T-cell (primary cell): ENCODE measurements at regions of chr2 and their contacts with region 1.

Region 1: GRCh38 chr2:189661148-189661956 is at the start of gene ASNSD1:
- DNase-seq: peak; percentile 94 to 100 (median 99)
- ATAC-seq: peak; percentile 87 to 93 (median 88)
- H3K4me3 ChIP-seq: peak within 1 kb of the TSS; percentile 93 to 98
- H3K4me3 Mint-ChIP-seq: no peak within 1 kb of the TSS
- H3K27ac ChIP-seq: peak within 1 kb of the TSS; percentile 92
- H3K27ac Mint-ChIP-seq: no peak within 1 kb of the TSS
- H3K4me1 ChIP-seq: peaks cover 27 to 40% of the 10 kb centered on the region in 2 experiments
- H3K4me1 Mint-ChIP-seq: peaks cover 54 to 62% (median 55%) of the 10 kb centered on the region in 3 donors
- H3K27me3 ChIP-seq: no peaks in the 10 kb centered on the region
- H3K27me3 Mint-ChIP-seq: no peaks in the 10 kb centered on the region
- total RNA-seq, gene ASNSD1: 31.7 to 43.8 (median 35.9) TPM

Region 2: DNA sequence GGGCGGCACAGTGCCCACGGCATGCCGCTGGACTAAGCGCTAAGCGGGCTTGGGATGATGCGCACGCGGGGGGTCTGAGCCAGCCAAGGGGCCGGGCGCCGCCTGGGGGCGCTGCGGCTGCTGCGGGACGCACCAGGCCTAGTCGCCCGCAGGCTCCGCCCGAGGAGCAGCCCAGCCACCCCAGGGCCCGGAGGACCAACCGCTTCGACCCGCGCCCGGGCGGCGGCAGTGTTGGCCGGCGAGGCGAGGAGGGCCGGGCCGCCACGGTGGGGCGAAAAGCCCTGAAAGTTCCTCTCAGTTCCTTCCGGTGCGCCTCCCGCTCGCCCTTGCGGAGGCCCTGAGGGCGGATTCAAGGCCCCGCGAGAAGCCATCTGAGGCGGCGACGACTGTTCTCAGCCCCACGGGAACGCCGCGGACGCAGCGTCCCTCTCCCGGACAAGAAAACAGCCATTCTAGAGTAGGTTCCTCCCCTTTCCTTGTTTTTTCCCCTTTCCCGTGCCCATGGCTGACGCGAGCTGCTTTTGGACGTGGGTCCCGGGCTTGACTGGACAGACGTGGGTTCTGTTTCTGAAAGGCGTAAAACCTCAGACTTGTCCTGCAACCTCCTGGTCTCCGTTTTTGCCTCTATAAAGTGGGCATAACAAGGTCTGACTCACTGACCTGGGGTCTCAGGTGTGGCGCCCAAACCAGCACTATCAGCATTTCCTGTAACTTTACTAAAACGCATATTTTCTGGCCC is 13.2 kb after region 1 on chr2 and contains the start of gene ANKAR:
- CTCF ChIA-PET with region 1: interaction called, 17 to 96 read pairs
- POLR2A ChIA-PET with region 1: interaction called, 4 to 8 read pairs
- DNase-seq: peak; percentile 54 to 89 (median 72)
- ATAC-seq: peak; percentile 95 to 97 (median 96)
- H3K4me3 ChIP-seq: peak within 1 kb of the TSS; percentile 67 to 96
- H3K4me3 Mint-ChIP-seq: peak within 1 kb of the TSS; percentile 91 to 95 (median 93)
- H3K27ac ChIP-seq: peak within 1 kb of the TSS; percentile 88
- H3K27ac Mint-ChIP-seq: peak within 1 kb of the TSS; percentile 97 to 99
- H3K4me1 ChIP-seq: peaks cover 3 to 21% of the 10 kb centered on the region in 2 experiments
- H3K4me1 Mint-ChIP-seq: peaks cover 30 to 44% (median 41%) of the 10 kb centered on the region in 3 donors
- H3K27me3 ChIP-seq: no peaks in the 10 kb centered on the region
- H3K27me3 Mint-ChIP-seq: no peaks in the 10 kb centered on the region
- total RNA-seq, gene ANKAR: 12.5 to 14.9 (median 12.9) TPM

Region 3: GRCh38 chr2:189698020-189698887 is 36.9 kb after region 1 on chr2:
- CTCF ChIA-PET with region 1: interaction called, 18 to 74 read pairs
- POLR2A ChIA-PET with region 1: interaction called, 3 to 4 read pairs
- DNase-seq: peak in 23 of 35 experiments; percentile 5 to 74 (median 28)
- ATAC-seq: peak; percentile 37 to 71 (median 44)
- H3K4me3 ChIP-seq: no peak overlapping the region
- H3K4me3 Mint-ChIP-seq: no peak overlapping the region
- H3K27ac ChIP-seq: no peak overlapping the region
- H3K27ac Mint-ChIP-seq: peak overlapping the region in 1 of 2 donors; percentile 50
- H3K4me1 ChIP-seq: no peaks in the 10 kb centered on the region
- H3K4me1 Mint-ChIP-seq: peaks cover 0 to 4% (median 0%) of the 10 kb centered on the region in 3 donors
- H3K27me3 ChIP-seq: no peaks in the 10 kb centered on the region
- H3K27me3 Mint-ChIP-seq: no peaks in the 10 kb centered on the region

Region 4: GRCh38 chr2:190137561-190137960 is 476.2 kb after region 1 on chr2:
- CTCF ChIA-PET with region 1: no interaction called
- POLR2A ChIA-PET with region 1: no interaction called
- DNase-seq: no peak
- ATAC-seq: no peak
- H3K4me3 ChIP-seq: no peak overlapping the region
- H3K4me3 Mint-ChIP-seq: no peak overlapping the region
- H3K27ac ChIP-seq: no peak overlapping the region
- H3K27ac Mint-ChIP-seq: no peak overlapping the region
- H3K4me1 ChIP-seq: no peaks in the 10 kb centered on the region
- H3K4me1 Mint-ChIP-seq: no peaks in the 10 kb centered on the region
- H3K27me3 ChIP-seq: no peaks in the 10 kb centered on the region
- H3K27me3 Mint-ChIP-seq: no peaks in the 10 kb centered on the region